ENCODE measurements at regions of chr7 and their contacts with region 1.

Region 1: DNA sequence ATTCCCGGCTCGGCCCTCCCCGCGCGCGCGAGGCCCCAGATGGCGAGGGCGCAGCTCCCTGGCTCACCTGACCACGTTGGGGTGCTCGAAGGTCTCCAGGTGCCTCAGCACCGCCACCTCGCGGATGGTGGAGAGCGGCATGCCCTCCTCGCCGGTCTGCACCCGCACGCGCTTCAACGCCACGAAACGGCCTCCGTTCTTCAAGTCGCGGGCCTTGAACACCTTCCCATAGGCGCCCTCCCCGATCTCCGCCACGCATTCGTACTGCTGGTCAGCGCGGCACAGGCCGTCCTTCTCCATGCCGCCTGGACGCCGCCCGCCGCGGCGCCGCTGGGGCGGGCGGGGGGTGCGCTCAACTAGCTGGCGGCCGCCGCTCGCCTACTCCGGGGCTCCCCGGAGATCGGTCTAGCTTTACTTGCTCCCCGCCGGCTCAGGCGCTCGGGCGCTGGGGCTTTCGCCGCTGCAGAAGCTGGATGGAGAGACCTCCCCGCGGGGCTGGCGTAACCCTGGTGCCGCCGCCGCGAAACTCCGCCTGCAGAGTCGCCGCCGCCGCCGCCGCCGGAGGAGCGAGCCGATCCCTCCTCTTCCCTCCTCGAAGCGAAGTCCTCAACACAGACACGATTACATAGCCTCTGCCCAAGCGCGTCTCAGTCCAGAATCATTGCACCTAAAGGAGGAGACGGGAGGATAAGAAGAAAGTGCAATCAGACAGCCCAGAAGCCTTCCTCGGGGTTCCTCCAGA is 3.2 kb downstream of the CDK6 start:
- DNase-seq: peak; percentile 94

Region 2: DNA sequence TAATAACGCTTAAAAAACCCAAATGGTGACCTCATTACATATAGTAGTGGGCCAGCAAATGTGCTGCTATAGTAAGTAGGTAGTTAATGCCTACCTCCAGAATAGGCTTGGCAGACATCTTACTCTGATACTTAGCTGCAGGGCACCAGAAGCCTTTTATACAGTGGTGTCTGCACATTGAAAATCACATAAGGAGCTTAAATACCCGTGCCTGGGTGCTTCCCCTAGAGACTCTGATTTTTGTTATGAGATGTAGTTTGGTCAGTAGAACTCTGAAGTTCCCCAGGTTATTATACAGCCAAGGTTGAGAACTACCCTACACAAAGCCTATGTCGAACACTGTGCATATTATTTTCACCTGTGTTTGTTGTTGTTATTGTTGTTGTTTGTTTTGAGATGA is 540.2 kb before region 1 on chr7:
- intact Hi-C with region 1: no loop called
- DNase-seq: no peak

Region 3: DNA sequence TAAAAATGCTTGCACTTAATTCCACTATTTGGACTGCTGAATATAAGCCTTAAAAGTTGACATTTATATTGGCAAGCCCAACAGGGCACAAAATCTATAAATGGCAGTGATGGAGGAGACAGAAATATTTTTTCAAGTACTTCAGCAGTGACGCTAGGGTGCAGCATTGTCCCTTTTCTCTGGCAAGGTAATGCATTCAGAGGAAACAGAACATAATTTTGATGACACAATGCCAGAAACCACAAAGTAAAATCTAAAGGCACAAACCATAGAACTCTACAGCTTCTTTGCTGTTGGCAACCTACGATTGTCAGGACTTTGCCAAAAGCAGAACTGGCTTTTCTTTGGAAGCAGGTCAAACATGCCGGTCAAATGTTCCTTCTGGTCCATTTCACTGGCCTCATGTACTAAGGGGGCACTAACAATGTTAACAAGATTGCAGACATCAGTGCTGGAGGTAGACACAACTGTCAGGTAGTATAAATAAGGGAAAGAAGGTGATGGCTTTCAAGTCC is 212.1 kb before region 1 on chr7:
- intact Hi-C with region 1: loop called in 1 of 2 experiments (anchors 10 kb)
- DNase-seq: no peak

Region 4: DNA sequence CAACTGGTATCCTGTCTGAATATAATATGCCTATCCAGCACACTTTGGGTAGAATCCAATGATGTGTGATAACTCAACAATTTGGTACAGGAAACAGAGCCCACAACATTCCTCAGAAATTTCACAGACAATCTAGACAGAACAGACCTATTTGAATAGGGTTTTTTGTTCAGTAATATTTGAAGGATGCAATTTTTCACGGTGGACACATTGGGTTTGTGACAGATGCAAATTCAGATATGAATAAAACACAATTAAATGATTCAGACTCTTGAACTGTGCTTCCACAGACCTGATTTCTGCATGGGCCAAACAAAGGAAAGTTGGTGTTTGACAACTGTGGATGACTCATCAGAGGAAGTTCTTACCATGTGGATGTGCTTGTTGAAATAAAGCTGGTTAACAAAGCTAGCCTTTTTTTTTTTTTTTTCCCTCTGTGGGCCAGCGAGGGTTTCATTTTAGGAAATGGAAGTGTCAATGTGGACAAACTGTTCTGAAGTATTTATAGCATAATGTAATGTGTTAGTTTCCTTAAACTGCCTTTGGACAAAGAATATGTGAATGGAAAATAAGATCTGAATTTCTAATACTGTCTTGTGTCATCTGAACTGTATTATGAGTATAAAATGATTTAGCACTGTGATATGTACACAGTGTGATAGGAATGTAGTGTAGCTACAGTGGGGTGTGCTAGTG is 199.8 kb before region 1 on chr7:
- intact Hi-C with region 1: loop called (anchors 10 kb)
- DNase-seq: no peak

Region 5: DNA sequence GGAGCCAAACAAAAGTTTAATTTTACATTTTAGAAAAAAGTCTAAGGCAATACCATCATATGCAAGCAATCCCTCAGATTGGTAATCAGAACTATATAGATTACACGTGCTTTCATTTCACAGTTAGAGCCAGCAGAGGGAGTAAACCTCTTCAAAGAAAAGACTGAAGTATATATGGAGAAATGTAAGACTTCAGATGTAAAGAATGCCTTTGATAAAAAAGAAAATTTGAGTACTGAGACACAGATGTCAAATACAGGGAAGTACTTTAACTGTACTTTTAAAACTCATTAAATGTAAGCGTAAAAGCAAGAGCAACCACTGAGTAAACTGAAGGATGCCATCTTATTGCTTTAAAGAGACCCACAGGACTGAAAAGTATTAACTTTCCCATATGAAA is 141.6 kb before region 1 on chr7:
- intact Hi-C with region 1: loop called (anchors 5 to 10 kb)
- DNase-seq: no peak

Region 6: DNA sequence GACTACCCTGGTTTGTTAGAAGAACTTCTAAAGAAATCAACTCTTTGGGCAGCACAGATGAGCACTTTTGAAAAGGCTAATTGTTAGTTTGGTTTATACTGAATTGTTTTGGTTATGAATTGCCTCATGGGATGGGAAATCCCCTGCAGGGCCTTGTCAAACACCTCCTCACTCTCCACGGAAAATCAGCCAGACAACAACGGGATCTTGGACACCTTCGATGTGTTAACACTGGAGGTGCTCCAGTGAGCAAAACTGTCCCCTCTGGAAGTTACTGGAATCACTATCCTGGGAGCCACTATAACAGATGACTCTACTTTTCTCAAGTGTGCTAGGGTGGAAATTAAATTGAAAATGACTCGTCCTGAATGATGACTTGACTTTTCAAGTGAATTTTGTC is 35.5 kb before region 1 on chr7:
- intact Hi-C with region 1: no loop called
- DNase-seq: no peak

Region 7: DNA sequence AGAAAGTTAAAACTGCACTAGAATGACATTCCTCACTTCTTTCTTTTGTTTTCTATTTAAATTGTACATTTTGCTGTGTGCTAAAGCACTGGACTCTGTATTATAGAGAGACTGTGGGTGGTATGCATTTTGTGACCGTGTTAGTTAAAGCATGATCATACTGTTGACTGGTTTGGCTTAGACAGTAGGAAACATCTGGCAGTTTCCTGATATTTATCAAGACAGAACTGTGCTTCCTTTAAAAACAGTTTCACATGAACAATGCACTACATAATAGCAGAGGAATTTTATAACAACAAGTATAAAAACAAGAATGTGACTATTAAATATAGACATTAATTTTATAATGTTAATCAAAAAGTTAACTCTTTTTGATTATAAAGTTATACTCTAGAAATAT is 1111.5 kb after region 1 on chr7:
- intact Hi-C with region 1: no loop called
- DNase-seq: no peak

Region 8: GRCh38 chr7:94183289-94183749 is 1350.1 kb after region 1 on chr7:
- intact Hi-C with region 1: no loop called
- DNase-seq: peak; percentile 73

Measured in posterior vena cava (tissue), 2 donors.